Gastrocnemius medialis (tissue), 4 donors: ENCODE measurements at regions of chr10 and their contacts with region 1.

Region 1: DNA sequence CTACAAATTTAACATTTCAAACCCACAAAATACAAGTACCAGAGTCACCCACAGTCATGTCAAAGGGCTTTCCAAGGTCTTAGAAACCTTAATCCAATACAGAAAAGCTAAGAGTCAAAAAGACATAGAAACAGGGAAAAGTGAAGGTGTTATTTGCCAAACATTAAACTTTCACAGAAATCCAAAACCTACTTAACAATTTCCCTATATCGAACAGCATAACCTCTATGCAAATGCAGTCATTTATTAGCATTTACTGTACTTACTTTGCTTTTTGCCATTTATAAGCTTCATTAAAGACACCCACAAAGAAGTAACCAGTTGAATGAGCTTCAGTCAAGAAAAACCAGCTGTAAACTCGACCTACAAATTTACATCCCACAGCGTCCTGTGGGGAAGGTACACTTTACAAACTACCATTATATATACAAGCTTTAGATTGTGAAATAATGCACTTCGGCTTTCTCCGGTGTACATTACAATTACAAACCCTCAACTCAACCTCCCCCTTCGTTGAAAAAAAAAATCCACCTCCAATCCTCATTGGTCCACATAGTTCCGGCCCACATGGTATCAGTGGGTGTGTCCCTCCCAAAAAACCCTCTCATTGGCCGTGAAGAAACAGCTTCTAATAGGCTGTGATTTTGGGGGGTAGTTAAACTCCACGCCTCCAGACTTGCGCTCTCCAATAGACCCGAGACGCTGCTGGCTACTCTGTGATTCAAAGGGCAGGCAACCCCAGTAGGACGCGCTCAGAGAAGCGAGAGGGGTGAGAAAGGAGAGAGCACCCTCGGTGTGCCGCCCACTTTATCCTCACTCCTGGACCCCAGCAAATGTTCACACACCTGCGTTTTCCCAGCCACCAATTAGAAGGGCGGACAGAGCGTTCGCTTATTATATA is 1.4 kb downstream of the PANK1 start:
- DNase-seq: peak; percentile 89 to 91
- ATAC-seq: peak; percentile 77 to 78
- H3K4me3 ChIP-seq: peak overlapping the region; percentile 69 to 92 (median 80)
- H3K27ac ChIP-seq: peak overlapping the region; percentile 93 to 98 (median 96)
- H3K4me1 ChIP-seq: peaks cover 43 to 57% of the 10 kb centered on the region in 2 donors
- H3K27me3 ChIP-seq: no peaks in the 10 kb centered on the region
- CTCF ChIP-seq: no peak
- POLR2A ChIP-seq: peak; percentile 97 to 99

Region 2: GRCh38 chr10:89591111-89591795 is 52.4 kb before region 1 on chr10:
- in situ Hi-C with region 1: no loop called
- intact Hi-C with region 1: loop called (anchors 1 kb)
- DNase-seq: peak in 1 of 2 donors; percentile 54
- ATAC-seq: peak; percentile 37 to 79
- H3K4me3 ChIP-seq: no peak overlapping the region
- H3K27ac ChIP-seq: peak overlapping the region; percentile 67 to 79 (median 74)
- H3K4me1 ChIP-seq: peaks cover 40 to 52% of the 10 kb centered on the region in 2 donors
- H3K27me3 ChIP-seq: no peaks in the 10 kb centered on the region
- CTCF ChIP-seq: peak in 2 of 5 experiments; percentile 11 to 30
- POLR2A ChIP-seq: no peak

Region 3: GRCh38 chr10:91587710-91588638 is 1944.3 kb after region 1 on chr10:
- in situ Hi-C with region 1: no loop called
- intact Hi-C with region 1: loop called (anchors 10 kb)
- DNase-seq: peak in 1 of 2 donors; percentile 61
- ATAC-seq: peak; percentile 20 to 37
- H3K4me3 ChIP-seq: peak overlapping the region in 2 of 4 donors; percentile 1 to 13
- H3K27ac ChIP-seq: peak overlapping the region; percentile 87 to 91 (median 90)
- H3K4me1 ChIP-seq: peaks cover 60 to 67% of the 10 kb centered on the region in 2 donors
- H3K27me3 ChIP-seq: no peaks in the 10 kb centered on the region
- CTCF ChIP-seq: no peak
- POLR2A ChIP-seq: no peak